Natural killer cell (primary cell): ENCODE measurements at regions of chr21 and their contacts with region 1.

Region 1: DNA sequence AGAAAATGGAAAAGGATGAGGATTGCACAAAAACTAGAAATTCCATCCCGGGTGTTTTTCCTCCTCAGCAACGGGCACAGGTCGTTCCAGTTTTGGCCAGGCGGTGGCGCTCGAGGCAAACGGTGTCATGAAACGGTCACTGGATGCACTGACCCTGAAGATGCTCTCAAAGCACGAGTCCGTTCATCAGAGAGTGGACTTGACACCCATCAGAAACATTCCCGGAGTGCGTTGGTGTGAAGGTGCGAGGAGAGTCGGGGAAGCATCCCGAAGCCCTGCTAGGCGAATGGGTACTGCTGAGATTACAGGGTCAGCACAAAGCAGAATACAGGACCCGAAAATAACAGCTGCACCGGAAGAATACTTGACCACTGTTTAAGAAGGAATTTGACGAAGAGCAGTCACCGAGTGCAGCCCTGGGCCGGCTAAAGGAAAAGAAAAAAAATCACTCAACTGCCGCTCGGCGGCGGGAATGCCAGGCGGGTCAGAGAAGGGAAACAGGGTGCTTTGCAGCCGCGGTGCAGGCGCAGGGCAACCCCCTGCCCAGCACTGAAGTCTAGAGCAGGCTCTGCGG is 71.7 kb upstream of the ETS2 start:
- DNase-seq: peak; percentile 74 to 75
- ATAC-seq: peak; percentile 67 to 81 (median 79)
- H3K4me3 ChIP-seq: no peak overlapping the region
- H3K4me3 Mint-ChIP-seq: peak overlapping the region; percentile 60
- H3K27ac ChIP-seq: no peak overlapping the region
- H3K27ac Mint-ChIP-seq: no peak overlapping the region
- H3K4me1 ChIP-seq: peaks cover 6% of the 10 kb centered on the region
- H3K4me1 Mint-ChIP-seq: peaks cover 7 to 8% of the 10 kb centered on the region in 2 donors
- H3K27me3 ChIP-seq: peaks cover 17% of the 10 kb centered on the region
- H3K27me3 Mint-ChIP-seq: peaks cover 31 to 33% of the 10 kb centered on the region in 2 donors
- CTCF ChIP-seq: peak; percentile 97

Region 2: DNA sequence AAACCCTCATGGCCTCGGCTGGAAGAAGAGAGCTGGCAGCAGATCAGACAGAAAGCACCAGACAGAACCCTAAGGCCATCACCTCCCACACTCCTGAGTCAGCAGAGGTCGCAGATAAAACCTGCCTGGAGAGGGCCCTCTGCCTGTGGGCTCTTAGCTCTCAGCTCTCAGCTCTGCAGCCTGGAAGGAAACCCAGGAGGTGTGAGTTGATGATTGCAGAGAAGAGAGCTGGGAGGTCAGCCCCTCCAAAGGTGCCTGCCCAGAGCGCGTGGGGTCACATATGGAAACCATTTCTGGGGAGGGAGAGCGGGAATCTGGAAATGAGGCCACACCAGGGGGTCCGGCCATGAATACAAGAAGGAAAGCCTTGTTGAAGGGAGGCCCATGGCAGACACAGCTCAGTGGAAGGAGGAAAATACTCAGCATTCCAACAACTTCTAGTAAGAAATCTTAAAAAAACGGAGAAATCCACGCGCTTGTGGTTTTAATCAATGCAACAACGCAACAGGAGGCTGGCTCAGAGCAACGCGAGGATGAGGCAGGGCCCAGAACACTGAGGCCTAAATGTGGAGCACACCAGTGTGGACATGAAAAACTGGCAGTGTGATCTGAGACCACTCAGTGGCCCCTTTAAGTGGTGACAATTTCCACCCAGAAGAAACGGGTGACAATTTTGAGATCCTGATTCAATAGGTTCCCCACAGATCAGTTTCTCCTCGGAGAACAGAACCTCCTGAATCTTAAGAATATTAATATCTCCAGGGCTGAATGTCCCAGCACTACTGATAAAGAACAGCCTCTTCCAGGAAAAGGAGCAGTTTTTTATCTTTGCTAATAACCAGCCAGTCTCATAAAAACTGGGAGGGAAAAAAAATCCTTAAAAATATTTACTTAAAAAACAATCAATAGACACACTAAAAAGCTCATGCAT is 403.5 kb after region 1 on chr21:
- intact Hi-C with region 1: loop called (anchors 1 kb)
- DNase-seq: no peak
- ATAC-seq: no peak
- H3K4me3 ChIP-seq: no peak overlapping the region
- H3K4me3 Mint-ChIP-seq: no peak overlapping the region
- H3K27ac ChIP-seq: no peak overlapping the region
- H3K27ac Mint-ChIP-seq: no peak overlapping the region
- H3K4me1 ChIP-seq: no peaks in the 10 kb centered on the region
- H3K4me1 Mint-ChIP-seq: no peaks in the 10 kb centered on the region
- H3K27me3 ChIP-seq: no peaks in the 10 kb centered on the region
- H3K27me3 Mint-ChIP-seq: peaks cover 5 to 8% of the 10 kb centered on the region in 2 donors
- CTCF ChIP-seq: no peak

Region 3: GRCh38 chr21:39175154-39175553 is 441.1 kb after region 1 on chr21:
- intact Hi-C with region 1: loop called (anchors 10 kb)
- DNase-seq: peak in 1 of 2 donors; percentile 40
- ATAC-seq: no peak
- H3K4me3 ChIP-seq: no peak overlapping the region
- H3K4me3 Mint-ChIP-seq: no peak overlapping the region
- H3K27ac ChIP-seq: no peak overlapping the region
- H3K27ac Mint-ChIP-seq: no peak overlapping the region
- H3K4me1 ChIP-seq: no peaks in the 10 kb centered on the region
- H3K4me1 Mint-ChIP-seq: peaks cover 10 to 12% of the 10 kb centered on the region in 2 donors
- H3K27me3 ChIP-seq: no peaks in the 10 kb centered on the region
- H3K27me3 Mint-ChIP-seq: no peaks in the 10 kb centered on the region
- CTCF ChIP-seq: peak; percentile 53